HepG2 (cell line): ENCODE measurements at regions of chr10 and their contacts with region 1.

Region 1: DNA sequence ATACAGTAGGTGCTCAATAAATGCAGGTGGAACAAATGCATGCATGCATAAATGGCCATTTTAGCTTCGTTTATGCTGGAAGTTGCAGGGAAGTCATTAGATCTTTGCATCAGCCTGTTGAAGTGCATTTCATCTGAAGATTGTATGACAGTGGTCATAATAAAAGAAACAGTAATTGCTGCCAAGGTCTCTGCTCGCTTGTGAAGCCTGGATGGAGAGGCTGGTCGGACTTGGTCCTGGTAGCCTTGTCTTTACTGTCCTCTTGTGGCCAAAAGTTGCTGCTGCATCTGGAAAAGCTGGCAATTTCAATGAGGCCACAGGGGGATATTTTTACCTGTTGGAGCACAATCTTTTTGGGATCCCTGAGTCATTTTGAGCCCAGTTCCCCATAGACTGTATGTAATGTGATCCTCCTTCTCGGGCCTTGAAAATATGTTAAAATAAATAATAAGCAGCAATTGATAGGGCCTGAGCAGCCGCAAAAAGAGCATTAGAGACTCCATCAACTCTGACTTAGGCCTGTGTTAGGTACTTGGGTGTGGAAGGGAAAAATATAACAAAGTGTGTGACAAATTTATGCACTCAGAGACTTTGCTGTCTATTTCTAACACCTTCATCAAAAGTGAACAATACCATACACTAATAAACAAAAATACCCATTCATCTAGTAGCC is 31.6 kb upstream of the HABP2 start:
- DNase-seq: peak; percentile 41
- ATAC-seq: peak; percentile 77
- H3K4me3 ChIP-seq: no peak overlapping the region
- H3K27ac ChIP-seq: no peak overlapping the region
- H3K4me1 ChIP-seq: no peaks in the 10 kb centered on the region
- H3K27me3 ChIP-seq: 0 out of 5 replicates have a peak, but pooled peaks cover 0 to 4% of the 10 kb centered on the region in 2 experiments
- CTCF ChIP-seq: peak; percentile 85
- EP300 ChIP-seq: no peak
- POLR2A ChIP-seq: no peak
- RAD21 ChIP-seq: peak; percentile 56

Region 2: DNA sequence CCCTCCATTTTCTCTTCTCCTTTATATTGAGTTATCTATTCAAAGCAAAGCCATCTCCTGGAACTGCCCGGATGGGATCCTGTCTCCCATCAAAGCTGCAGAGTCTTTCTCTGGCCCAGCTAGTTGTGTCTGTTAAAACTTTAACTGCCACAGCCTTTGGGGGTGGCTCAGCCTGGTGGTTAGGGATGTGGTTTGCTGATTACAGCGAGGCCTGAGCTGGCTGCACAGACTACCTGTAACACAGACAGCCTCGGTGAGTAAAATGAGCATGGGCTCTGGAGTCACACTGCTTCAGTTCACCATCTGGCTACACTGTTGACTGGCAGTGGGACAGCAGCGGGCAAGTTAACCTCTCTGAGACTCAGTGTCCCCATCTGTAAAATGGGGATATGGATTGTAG is 13.2 kb after region 1 on chr10:
- CTCF ChIA-PET with region 1: no interaction called
- POLR2A ChIA-PET with region 1: no interaction called
- in situ Hi-C with region 1: no loop called
- intact Hi-C with region 1: no loop called
- DNase-seq: no peak
- ATAC-seq: no peak
- H3K4me3 ChIP-seq: no peak overlapping the region
- H3K27ac ChIP-seq: no peak overlapping the region
- H3K4me1 ChIP-seq: peaks cover 26% of the 10 kb centered on the region
- H3K27me3 ChIP-seq: peaks cover 3 to 5% of the 10 kb centered on the region in 2 experiments; a peak in 2 of 5 replicates
- CTCF ChIP-seq: no peak
- EP300 ChIP-seq: no peak
- POLR2A ChIP-seq: no peak
- RAD21 ChIP-seq: no peak

Region 3: DNA sequence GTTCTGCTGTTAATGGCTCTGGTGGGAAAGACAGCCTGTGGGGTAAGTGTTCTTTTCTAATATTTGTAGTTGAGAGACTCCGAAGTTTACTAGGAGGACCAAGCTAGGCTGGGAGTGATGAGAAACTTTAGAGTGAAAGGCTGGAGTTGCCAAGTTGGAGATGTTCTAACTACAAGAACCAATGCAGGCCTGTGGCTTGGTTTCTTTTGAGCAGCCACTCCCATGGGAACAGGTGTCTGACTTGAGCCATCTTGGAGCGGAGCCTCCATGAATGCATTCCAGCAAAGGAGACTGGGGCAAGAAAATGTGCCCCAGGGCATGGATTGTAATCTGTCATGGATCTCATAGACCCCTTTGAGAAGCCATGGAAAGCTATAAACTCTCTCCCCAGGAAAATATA is 31.9 kb after region 1 on chr10:
- CTCF ChIA-PET with region 1: no interaction called
- POLR2A ChIA-PET with region 1: no interaction called
- in situ Hi-C with region 1: no loop called
- intact Hi-C with region 1: no loop called
- DNase-seq: no peak
- ATAC-seq: no peak
- H3K4me3 ChIP-seq: no peak overlapping the region
- H3K27ac ChIP-seq: no peak overlapping the region
- H3K4me1 ChIP-seq: peaks cover 27% of the 10 kb centered on the region
- H3K27me3 ChIP-seq: peaks cover 0 to 4% of the 10 kb centered on the region in 2 experiments; a peak in 1 of 5 replicates
- CTCF ChIP-seq: no peak
- EP300 ChIP-seq: no peak
- POLR2A ChIP-seq: no peak
- RAD21 ChIP-seq: no peak

Region 4: DNA sequence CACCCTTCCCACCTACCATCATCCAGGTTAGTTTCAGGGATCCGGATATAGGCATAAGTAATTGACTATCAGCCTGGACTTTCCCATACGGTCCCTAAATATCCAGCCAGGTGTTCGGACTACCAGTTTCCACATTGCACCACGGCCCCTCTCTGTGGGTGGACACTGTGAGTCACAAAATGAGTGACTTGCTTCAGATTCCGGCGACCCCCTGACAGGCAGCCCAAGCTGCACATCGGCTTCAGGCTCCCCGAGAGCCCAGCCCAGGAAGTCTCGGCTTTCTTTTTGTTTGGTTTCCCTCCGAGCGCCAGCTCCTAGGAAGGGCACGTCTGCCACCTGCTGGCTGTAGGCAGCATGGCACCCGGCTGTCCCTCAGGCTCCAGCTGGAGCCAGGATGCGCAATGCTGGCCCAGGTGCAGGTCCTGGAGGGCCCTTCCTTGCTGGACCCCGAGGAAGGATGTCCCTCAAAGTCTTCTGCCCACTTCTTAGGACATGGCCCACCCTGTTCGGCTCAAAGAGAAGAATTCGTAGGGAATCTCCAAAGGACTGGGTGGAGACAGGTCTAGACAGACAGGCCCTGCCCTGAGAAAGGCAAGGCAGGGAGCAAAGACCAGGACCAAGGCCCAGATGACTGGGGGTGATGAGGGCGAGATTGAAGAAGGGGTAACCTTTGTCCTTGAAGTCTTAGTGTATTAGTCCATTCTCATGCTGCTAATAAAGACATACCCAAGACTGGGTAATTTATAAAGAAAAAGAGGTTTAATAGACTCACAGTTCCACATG is 42.2 kb after region 1 on chr10:
- CTCF ChIA-PET with region 1: interaction called, 4 read pairs
- POLR2A ChIA-PET with region 1: no interaction called
- in situ Hi-C with region 1: no loop called
- intact Hi-C with region 1: loop called (anchors 1 kb)
- DNase-seq: peak; percentile 35
- ATAC-seq: peak; percentile 95
- H3K4me3 ChIP-seq: peak overlapping the region; percentile 15 to 70 (median 35); a peak in 3 of 6 replicates
- H3K27ac ChIP-seq: no peak overlapping the region
- H3K4me1 ChIP-seq: peaks cover 16% of the 10 kb centered on the region
- H3K27me3 ChIP-seq: no peaks in the 10 kb centered on the region; a peak in 2 of 5 replicates
- CTCF ChIP-seq: peak; percentile 97
- EP300 ChIP-seq: no peak
- POLR2A ChIP-seq: no peak
- RAD21 ChIP-seq: peak; percentile 90